PC-3 (cell line): ENCODE measurements at regions of chr17 and their contacts with region 1.

Region 1: DNA sequence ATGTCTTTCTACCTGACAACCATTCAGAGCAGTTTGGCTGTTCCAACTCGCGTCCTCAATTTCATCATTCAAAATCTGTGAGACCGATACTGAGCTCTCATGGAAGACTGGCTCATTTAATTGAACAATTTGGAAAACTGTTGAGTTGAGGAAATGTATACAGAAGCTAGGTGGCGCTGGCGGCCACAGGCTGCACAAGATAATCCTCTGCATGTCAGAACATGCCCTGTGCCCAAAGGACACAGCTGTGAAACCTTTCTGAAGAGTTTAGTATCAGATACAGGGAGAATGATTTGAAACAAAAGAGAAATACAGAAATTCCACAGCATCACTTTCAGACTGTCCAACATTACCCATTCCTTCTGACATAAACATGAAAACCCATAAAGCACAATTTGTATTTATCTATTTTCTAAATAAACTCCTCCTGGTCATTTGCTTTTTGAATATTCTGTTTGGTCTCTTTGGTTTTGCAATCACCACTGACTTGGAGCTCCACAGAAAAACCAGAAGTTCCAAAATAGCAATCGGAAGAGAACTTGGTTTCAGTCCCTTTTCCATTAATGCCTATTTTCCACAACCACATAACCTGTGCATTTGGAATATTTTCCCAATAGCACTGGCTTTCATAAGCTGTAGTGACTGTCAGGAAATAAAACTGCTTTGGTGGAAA is 192.8 kb downstream of the MAP2K6 start:
- DNase-seq: peak; percentile 86
- ATAC-seq: peak; percentile 42
- H3K4me3 ChIP-seq: no peak overlapping the region
- H3K27ac ChIP-seq: no peak overlapping the region
- H3K4me1 ChIP-seq: peaks cover 30% of the 10 kb centered on the region
- H3K27me3 ChIP-seq: no peaks in the 10 kb centered on the region
- CTCF ChIP-seq: peak; percentile 99

Region 2: GRCh38 chr17:69480245-69480644 is 127.1 kb before region 1 on chr17:
- CTCF ChIA-PET with region 1: no interaction called
- POLR2A ChIA-PET with region 1: no interaction called
- intact Hi-C with region 1: no loop called
- DNase-seq: no peak
- ATAC-seq: no peak
- H3K4me3 ChIP-seq: no peak overlapping the region
- H3K27ac ChIP-seq: no peak overlapping the region
- H3K4me1 ChIP-seq: peaks cover 3% of the 10 kb centered on the region; the same call in 1 of the 2 replicates
- H3K27me3 ChIP-seq: no peaks in the 10 kb centered on the region
- CTCF ChIP-seq: no peak

Region 3: DNA sequence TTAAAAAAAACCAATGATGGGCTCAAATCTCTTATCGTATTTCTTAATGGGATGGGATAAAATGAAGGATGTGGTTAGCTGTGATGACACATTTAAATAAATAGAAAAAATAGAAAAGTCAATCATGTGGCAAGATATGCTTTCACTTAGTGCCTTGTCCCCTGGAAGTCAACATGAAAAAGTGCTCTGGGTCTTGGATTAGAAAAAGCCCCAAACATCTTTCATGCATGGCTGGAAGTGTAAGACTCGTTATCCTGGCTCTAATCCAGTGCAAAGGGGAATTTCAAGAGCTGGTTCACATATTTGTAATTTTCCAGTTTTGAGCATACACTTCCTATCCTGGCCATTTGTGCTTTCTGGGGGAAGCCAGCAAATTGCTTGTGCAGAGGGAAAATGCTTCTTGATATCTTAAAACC is 31.9 kb before region 1 on chr17:
- CTCF ChIA-PET with region 1: interaction called, 6 read pairs
- POLR2A ChIA-PET with region 1: no interaction called
- intact Hi-C with region 1: loop called (anchors 2 kb)
- DNase-seq: peak; percentile 97
- ATAC-seq: peak; percentile 87
- H3K4me3 ChIP-seq: no peak overlapping the region; the same call in 1 of the 2 replicates
- H3K27ac ChIP-seq: peak overlapping the region; percentile 58
- H3K4me1 ChIP-seq: peaks cover 25% of the 10 kb centered on the region
- H3K27me3 ChIP-seq: no peaks in the 10 kb centered on the region
- CTCF ChIP-seq: no peak

Region 4: GRCh38 chr17:69761751-69762321 is 154.5 kb after region 1 on chr17:
- CTCF ChIA-PET with region 1: no interaction called
- POLR2A ChIA-PET with region 1: no interaction called
- intact Hi-C with region 1: loop called (anchors 1 kb)
- DNase-seq: peak; percentile 98
- ATAC-seq: peak; percentile 93
- H3K4me3 ChIP-seq: no peak overlapping the region; the same call in 1 of the 2 replicates
- H3K27ac ChIP-seq: peak overlapping the region; percentile 84
- H3K4me1 ChIP-seq: peaks cover 50% of the 10 kb centered on the region
- H3K27me3 ChIP-seq: no peaks in the 10 kb centered on the region
- CTCF ChIP-seq: no peak

Region 5: DNA sequence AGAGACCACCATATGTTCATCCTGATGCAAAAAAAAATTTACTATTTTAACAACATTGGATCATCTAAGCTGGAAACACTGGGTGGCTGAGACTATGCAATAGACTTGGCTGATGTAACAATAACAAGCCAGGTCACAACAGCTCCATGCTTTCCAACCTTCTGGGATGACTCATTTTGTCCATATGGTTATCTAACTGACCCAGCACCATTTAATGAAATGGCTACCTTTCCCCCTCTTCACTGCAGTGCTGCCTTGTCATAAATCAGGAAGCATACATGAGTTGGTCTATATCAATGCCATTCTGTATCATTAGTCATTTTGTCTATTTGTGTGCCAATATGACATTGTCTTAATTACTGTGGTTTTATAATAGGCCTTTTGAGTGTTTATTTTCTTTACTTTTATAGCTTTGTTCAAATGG is 250.1 kb after region 1 on chr17:
- CTCF ChIA-PET with region 1: no interaction called
- POLR2A ChIA-PET with region 1: no interaction called
- intact Hi-C with region 1: loop called (anchors 1 kb)
- DNase-seq: peak; percentile 97
- ATAC-seq: peak; percentile 98
- H3K4me3 ChIP-seq: no peak overlapping the region
- H3K27ac ChIP-seq: peak overlapping the region; percentile 11
- H3K4me1 ChIP-seq: peaks cover 17% of the 10 kb centered on the region
- H3K27me3 ChIP-seq: no peaks in the 10 kb centered on the region
- CTCF ChIP-seq: no peak

Region 6: GRCh38 chr17:70089513-70090148 is 482.3 kb after region 1 on chr17:
- CTCF ChIA-PET with region 1: no interaction called
- POLR2A ChIA-PET with region 1: no interaction called
- intact Hi-C with region 1: loop called (anchors 2 kb)
- DNase-seq: peak; percentile 62
- ATAC-seq: peak; percentile 67
- H3K4me3 ChIP-seq: no peak overlapping the region
- H3K27ac ChIP-seq: no peak overlapping the region
- H3K4me1 ChIP-seq: peaks cover 22% of the 10 kb centered on the region
- H3K27me3 ChIP-seq: no peaks in the 10 kb centered on the region
- CTCF ChIP-seq: no peak

Region 7: GRCh38 chr17:70552230-70552981 is 945.1 kb after region 1 on chr17:
- CTCF ChIA-PET with region 1: no interaction called
- POLR2A ChIA-PET with region 1: no interaction called
- intact Hi-C with region 1: loop called (anchors 5 kb)
- DNase-seq: peak; percentile 80
- ATAC-seq: peak; percentile 78
- H3K4me3 ChIP-seq: no peak overlapping the region
- H3K27ac ChIP-seq: no peak overlapping the region
- H3K4me1 ChIP-seq: no peaks in the 10 kb centered on the region
- H3K27me3 ChIP-seq: no peaks in the 10 kb centered on the region
- CTCF ChIP-seq: peak; percentile 81